ENCODE measurements at regions of chr3 and their contacts with region 1.

Region 1: GRCh38 chr3:139173372-139174108 is 128.8 kb upstream of the PRR23C start:
- DNase-seq: no peak
- H3K4me3 ChIP-seq: peak overlapping the region in 2 of 3 experiments; percentile 13 to 18
- H3K27ac ChIP-seq: no peak overlapping the region
- H3K4me1 ChIP-seq: no peaks in the 10 kb centered on the region
- H3K27me3 ChIP-seq: no peaks in the 10 kb centered on the region
- CTCF ChIP-seq: no peak

Region 2: GRCh38 chr3:138898301-138898700 is 275.2 kb before region 1 on chr3:
- dilution Hi-C with region 1: no loop called
- DNase-seq: no peak
- H3K4me3 ChIP-seq: no peak overlapping the region
- H3K27ac ChIP-seq: no peak overlapping the region
- H3K4me1 ChIP-seq: peaks cover 8% of the 10 kb centered on the region
- H3K27me3 ChIP-seq: no peaks in the 10 kb centered on the region
- CTCF ChIP-seq: no peak

Region 3: GRCh38 chr3:139111392-139112229 is 61.9 kb before region 1 on chr3:
- dilution Hi-C with region 1: loop called (anchors 10 kb)
- DNase-seq: no peak
- H3K4me3 ChIP-seq: no peak overlapping the region
- H3K27ac ChIP-seq: no peak overlapping the region
- H3K4me1 ChIP-seq: no peaks in the 10 kb centered on the region
- H3K27me3 ChIP-seq: peaks cover 7% of the 10 kb centered on the region
- CTCF ChIP-seq: peak; percentile 86 to 88 (median 87)

Region 4: GRCh38 chr3:139302084-139302800 is 128.7 kb after region 1 on chr3:
- dilution Hi-C with region 1: no loop called
- DNase-seq: peak; percentile 54
- H3K4me3 ChIP-seq: no peak overlapping the region
- H3K27ac ChIP-seq: no peak overlapping the region
- H3K4me1 ChIP-seq: peaks cover 20% of the 10 kb centered on the region
- H3K27me3 ChIP-seq: no peaks in the 10 kb centered on the region
- CTCF ChIP-seq: no peak

Measured in keratinocyte (primary cell).